Sigmoid colon (tissue), 7 donors: ENCODE measurements at regions of chr12 and their contacts with region 1.

Region 1: DNA sequence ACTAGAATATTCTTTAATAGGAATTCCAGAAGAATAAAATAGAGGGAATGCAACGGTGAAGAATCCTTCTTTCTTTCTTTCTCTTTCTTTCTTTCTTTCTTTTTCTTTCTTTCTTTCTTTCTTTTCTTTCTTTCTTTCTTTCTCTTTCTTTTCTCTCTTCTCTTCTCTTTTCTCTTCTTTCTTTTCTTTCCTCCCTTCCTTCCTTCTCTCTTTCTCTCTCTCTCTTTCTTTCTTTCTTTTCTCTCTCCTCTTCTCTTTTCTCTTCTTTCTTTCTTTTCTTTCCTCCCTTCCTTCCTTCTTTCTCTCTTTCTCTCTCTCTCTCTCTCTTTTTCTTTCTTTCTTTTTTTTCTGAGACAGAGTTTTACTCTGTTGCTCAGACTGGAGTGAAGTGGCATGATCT is 160.8 kb upstream of the PRICKLE1 start:
- DNase-seq: no peak
- H3K4me3 ChIP-seq: no peak overlapping the region
- H3K27ac ChIP-seq: no peak overlapping the region
- H3K4me1 ChIP-seq: no peaks in the 10 kb centered on the region
- H3K27me3 ChIP-seq: no peaks in the 10 kb centered on the region
- CTCF ChIP-seq: no peak
- EP300 ChIP-seq: no peak
- POLR2A ChIP-seq: no peak

Region 2: GRCh38 chr12:42704810-42705401 is 45.5 kb before region 1 on chr12:
- intact Hi-C with region 1: loop called (anchors 5 kb)
- DNase-seq: no peak
- H3K4me3 ChIP-seq: no peak overlapping the region
- H3K27ac ChIP-seq: no peak overlapping the region
- H3K4me1 ChIP-seq: no peaks in the 10 kb centered on the region
- H3K27me3 ChIP-seq: no peaks in the 10 kb centered on the region
- CTCF ChIP-seq: no peak
- EP300 ChIP-seq: no peak
- POLR2A ChIP-seq: no peak